GM10248 (cell line): ENCODE measurements at regions of chr4 and their contacts with region 1.

Region 1: DNA sequence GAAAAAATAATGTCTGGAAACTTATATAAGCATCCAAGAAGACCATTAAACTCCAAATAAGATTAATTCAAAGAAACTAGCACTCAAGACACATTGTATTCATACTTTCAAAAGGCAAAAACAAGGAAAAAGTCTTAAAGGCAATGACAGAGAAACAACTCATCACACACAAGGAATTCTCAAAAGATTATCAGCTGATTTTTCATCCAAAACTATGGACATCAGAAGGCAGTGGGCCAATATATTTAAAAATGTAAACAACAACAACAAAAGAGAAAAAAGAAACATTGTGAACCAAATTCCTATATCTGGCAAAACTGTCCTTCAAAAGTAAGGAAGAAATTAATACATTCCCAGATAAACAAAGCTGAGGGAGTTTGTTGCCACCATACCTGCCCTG is 711.4 kb upstream of the GALNTL6 start:
- DNase-seq: no peak
- CTCF ChIP-seq: no peak

Region 2: GRCh38 chr4:171242831-171243230 is 141.0 kb after region 1 on chr4:
- CTCF ChIA-PET with region 1: no interaction called
- POLR2A ChIA-PET with region 1: no interaction called
- DNase-seq: no peak
- CTCF ChIP-seq: no peak

Region 3: GRCh38 chr4:172489861-172490260 is 1388.0 kb after region 1 on chr4:
- CTCF ChIA-PET with region 1: no interaction called
- POLR2A ChIA-PET with region 1: interaction called, 12 read pairs
- DNase-seq: no peak
- CTCF ChIP-seq: no peak